Posterior vena cava (tissue), 2 donors: ENCODE measurements at regions of chr16 and their contacts with region 1.

Region 1: DNA sequence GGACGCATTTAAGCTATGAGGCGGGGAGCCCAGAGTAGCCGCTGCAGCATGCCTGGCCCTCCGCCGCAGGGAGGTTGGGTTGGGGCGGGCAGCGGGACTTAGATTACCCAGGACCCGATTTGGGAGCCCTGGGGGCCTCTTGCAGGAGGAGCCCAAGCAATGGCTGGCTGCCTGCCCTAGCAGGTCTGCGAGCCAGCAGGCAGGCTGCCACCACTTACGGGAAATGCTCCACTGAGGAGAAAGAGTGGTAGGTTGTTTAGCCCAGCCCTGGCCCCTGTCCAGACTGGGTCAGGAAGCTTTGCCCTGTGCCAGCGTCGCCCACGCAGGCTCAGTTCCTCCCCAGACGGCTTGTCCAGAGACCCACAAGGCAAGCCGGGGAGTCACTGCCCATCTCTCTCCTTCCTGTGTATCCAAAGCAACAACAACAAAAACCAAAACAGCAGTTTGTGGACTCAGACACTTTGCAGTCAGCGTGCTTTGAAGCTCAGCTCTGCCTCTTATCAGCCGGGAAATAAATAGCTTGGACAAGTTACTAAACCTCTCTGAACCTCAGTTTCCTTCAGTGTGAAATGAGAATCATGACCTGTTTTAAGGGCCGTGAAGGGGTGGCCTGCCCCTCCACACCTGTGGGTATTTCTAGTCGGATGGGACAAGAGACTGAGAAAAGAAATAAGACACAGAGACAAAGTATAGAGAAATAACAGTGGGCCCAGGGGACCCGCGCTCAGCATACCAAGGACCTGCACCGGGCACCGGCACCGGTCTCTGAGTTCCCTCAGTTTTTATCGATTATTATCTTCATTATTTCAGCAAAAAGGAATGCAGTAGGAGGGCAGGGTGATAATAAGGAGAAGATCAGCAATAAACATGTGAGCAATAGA is 10.5 kb upstream of the TVP23A start:
- DNase-seq: peak; percentile 98

Region 2: GRCh38 chr16:10668322-10669045 is 160.6 kb before region 1 on chr16:
- intact Hi-C with region 1: no loop called
- DNase-seq: peak; percentile 50

Region 3: GRCh38 chr16:10743610-10744393 is 85.3 kb before region 1 on chr16 and contains the start of gene NUBP1:
- intact Hi-C with region 1: loop called in 1 of 2 experiments (anchors 10 kb)
- DNase-seq: peak; percentile 100
- total RNA-seq, gene NUBP1: 27.1 to 29.8 TPM